Psoas muscle (tissue), 8 donors: ENCODE measurements at regions of chr11 and their contacts with region 1.

Region 1: GRCh38 chr11:88552377-88553062 is 215.0 kb upstream of the CTSC start:
- DNase-seq: peak in 1 of 2 donors; percentile 18
- ATAC-seq: peak in 3 of 4 donors; percentile 48 to 59 (median 54)
- H3K4me3 ChIP-seq: no peak overlapping the region
- H3K27ac ChIP-seq: no peak overlapping the region
- H3K4me1 ChIP-seq: no peaks in the 10 kb centered on the region
- H3K27me3 ChIP-seq: peaks cover 0 to 4% (median 0%) of the 10 kb centered on the region in 3 donors
- CTCF ChIP-seq: peak; percentile 52

Region 2: DNA sequence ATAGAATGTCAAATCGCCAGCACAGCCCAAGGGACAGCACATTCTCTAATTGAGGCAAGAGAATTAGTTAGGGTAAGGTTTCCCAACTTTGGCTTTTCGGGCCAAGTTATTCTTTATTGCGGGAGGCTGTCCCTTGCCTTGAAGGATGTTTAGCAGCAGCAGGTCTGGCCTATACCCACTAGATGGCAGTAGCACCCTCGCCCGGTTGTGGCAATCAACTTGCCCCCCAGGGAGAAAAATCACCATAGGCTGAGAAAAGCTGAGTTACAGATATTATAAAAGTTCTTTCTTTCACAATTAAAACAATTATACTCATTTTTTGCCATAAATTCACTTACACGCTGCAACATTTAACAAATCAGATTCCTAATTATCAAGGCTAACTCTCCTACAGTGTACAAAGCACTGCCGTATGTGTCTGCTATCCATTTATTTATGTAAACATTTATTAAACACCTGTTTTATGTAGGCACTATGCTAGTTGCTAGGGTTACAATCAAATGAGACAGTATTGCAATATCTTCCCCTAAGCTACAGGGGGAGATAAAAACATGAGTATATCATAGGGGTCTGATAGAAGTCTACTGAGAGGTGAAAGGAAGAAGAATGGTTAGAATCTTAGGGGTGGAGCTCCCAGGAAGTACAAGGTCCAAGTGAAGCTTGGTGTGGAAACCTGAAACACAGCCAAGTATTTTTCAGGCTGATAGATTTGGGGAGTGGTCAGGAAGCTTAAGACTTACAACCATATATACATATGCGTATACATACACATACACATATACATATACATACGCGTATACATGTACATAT is 829.6 kb before region 1 on chr11:
- intact Hi-C with region 1: loop called (anchors 10 kb)
- DNase-seq: no peak
- ATAC-seq: peak in 2 of 4 donors; percentile 50 to 80
- H3K4me3 ChIP-seq: no peak overlapping the region
- H3K27ac ChIP-seq: no peak overlapping the region
- H3K4me1 ChIP-seq: no peaks in the 10 kb centered on the region
- H3K27me3 ChIP-seq: no peaks in the 10 kb centered on the region
- CTCF ChIP-seq: peak; percentile 56

Region 3: DNA sequence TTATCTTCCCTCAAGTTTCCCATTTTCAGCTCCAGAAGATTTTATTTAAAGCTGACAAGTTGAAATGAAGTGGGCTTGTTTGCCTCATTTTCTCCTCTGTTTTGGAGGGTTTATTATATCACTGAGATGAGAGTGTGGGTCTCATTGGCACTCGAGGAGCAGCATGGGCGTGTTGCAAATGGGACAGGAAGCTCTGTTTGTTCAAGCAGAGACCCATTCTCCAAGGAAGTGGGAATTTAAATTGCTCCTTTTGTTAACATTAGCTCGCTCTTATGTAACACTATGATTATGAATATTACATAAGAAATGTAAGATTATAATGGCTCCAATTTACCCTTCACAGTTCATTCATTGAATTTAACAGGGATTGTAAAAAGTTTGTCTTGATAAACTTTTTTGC is 102.7 kb after region 1 on chr11:
- intact Hi-C with region 1: no loop called
- DNase-seq: no peak
- ATAC-seq: no peak
- H3K4me3 ChIP-seq: no peak overlapping the region
- H3K27ac ChIP-seq: no peak overlapping the region
- H3K4me1 ChIP-seq: no peaks in the 10 kb centered on the region
- H3K27me3 ChIP-seq: no peaks in the 10 kb centered on the region
- CTCF ChIP-seq: no peak